CD4-positive, alpha-beta memory T cell (primary cell): ENCODE measurements at regions of chrX and their contacts with region 1.

Region 1: GRCh38 chrX:119753571-119754257 is 4.7 kb upstream of the SOWAHD start:
- DNase-seq: peak; percentile 75 to 87 (median 84)
- H3K4me3 ChIP-seq: no peak overlapping the region
- H3K4me3 Mint-ChIP-seq: peak overlapping the region in 7 of 8 donors; percentile 58 to 81 (median 76)
- H3K27ac ChIP-seq: peak overlapping the region; percentile 67
- H3K27ac Mint-ChIP-seq: peak overlapping the region; percentile 93 to 99 (median 96)
- H3K4me1 ChIP-seq: peaks cover 48% of the 10 kb centered on the region
- H3K4me1 Mint-ChIP-seq: peaks cover 22 to 49% (median 38%) of the 10 kb centered on the region in 4 donors
- H3K27me3 ChIP-seq: no peaks in the 10 kb centered on the region
- H3K27me3 Mint-ChIP-seq: no peaks in the 10 kb centered on the region

Region 2: DNA sequence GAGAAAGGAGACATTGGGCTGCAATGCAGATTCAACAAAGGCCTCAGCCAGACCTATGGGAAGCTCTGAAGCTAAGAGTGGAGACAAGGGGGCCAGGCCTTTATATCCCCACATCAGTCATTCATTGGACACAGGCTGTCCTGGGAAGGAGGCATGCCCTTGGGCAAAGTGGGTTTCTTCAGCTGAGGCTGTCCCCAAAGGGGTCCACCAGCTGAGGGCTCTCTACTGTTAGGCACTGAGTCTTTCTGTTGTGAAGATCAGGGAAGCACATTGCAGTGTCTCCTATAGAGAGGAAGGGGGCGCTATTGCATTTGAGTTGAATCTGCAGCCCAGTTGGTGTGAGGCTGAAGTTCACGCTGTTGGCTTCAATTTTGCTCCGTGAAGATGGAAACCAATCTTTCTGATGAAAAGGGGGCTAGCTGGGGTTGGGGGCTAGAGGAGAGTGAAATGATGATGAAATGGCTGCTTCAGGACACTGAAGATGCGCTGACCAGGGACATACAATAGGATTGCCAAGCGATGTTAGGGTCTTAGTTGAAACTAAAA is 237.5 kb before region 1 on chrX:
- CTCF ChIA-PET with region 1: interaction called, 6 read pairs
- POLR2A ChIA-PET with region 1: interaction called, 4 read pairs
- intact Hi-C with region 1: loop called (anchors 1 kb)
- DNase-seq: peak; percentile 35 to 64 (median 63)
- H3K4me3 ChIP-seq: no peak overlapping the region
- H3K4me3 Mint-ChIP-seq: no peak overlapping the region
- H3K27ac ChIP-seq: no peak overlapping the region
- H3K27ac Mint-ChIP-seq: peak overlapping the region in 5 of 7 donors; percentile 5 to 58 (median 28)
- H3K4me1 ChIP-seq: no peaks in the 10 kb centered on the region
- H3K4me1 Mint-ChIP-seq: peaks cover 2 to 5% (median 4%) of the 10 kb centered on the region in 4 donors
- H3K27me3 ChIP-seq: no peaks in the 10 kb centered on the region
- H3K27me3 Mint-ChIP-seq: no peaks in the 10 kb centered on the region

Region 3: DNA sequence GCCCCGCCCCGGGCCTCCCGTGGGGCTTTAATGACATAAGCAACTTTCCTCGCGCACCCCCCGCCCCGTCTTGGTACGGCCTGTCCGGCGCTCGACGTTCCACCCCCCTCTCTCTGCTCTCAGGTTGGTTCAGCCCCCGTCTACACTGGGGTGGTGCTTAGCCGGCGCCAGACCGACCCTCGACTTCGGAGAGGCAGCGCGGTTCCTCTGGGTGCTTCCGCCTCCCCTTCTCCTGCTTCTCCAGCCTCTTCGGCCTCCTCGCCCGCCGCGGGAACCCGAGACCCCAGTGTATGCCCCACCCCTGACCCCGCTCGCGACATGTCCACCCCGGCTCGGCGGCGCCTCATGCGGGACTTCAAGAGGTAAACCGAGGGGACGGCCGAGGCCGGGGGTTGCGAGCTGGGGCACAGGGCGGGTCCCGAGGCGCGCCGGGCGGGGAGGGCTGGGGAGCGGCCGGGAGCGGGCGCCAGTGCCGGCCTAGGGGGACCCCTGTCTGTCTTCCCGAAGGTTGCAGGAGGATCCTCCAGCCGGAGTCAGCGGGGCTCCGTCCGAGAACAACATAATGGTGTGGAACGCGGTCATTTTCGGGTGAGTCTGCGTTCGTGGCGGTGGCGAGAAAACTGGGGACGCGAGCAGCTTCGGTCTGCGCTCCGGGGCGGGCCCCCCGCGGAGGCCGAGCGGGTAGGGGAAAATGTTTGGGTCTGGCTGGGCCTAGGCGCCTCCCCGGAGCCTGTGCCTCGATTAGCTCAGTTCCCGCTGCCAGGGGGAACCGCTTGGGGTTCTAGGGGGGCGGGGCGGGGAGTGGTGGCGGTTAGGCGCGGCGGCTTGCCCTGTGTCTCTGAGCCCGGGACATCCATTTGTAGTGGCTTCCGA is 179.1 kb before region 1 on chrX and contains the start of gene UBE2A:
- CTCF ChIA-PET with region 1: no interaction called
- POLR2A ChIA-PET with region 1: interaction called, 10 read pairs
- intact Hi-C with region 1: no loop called
- DNase-seq: peak; percentile 86 to 89 (median 89)
- H3K4me3 ChIP-seq: peak within 1 kb of the TSS in 1 of 2 donors; percentile 63
- H3K4me3 Mint-ChIP-seq: peak within 1 kb of the TSS; percentile 85 to 94 (median 92)
- H3K27ac ChIP-seq: peak within 1 kb of the TSS; percentile 78
- H3K27ac Mint-ChIP-seq: peak within 1 kb of the TSS; percentile 88 to 98 (median 96)
- H3K4me1 ChIP-seq: peaks cover 22% of the 10 kb centered on the region
- H3K4me1 Mint-ChIP-seq: peaks cover 2 to 33% (median 16%) of the 10 kb centered on the region in 4 donors
- H3K27me3 ChIP-seq: no peaks in the 10 kb centered on the region
- H3K27me3 Mint-ChIP-seq: no peaks in the 10 kb centered on the region
- total RNA-seq, gene UBE2A: 46.7 to 52.5 TPM

Region 4: DNA sequence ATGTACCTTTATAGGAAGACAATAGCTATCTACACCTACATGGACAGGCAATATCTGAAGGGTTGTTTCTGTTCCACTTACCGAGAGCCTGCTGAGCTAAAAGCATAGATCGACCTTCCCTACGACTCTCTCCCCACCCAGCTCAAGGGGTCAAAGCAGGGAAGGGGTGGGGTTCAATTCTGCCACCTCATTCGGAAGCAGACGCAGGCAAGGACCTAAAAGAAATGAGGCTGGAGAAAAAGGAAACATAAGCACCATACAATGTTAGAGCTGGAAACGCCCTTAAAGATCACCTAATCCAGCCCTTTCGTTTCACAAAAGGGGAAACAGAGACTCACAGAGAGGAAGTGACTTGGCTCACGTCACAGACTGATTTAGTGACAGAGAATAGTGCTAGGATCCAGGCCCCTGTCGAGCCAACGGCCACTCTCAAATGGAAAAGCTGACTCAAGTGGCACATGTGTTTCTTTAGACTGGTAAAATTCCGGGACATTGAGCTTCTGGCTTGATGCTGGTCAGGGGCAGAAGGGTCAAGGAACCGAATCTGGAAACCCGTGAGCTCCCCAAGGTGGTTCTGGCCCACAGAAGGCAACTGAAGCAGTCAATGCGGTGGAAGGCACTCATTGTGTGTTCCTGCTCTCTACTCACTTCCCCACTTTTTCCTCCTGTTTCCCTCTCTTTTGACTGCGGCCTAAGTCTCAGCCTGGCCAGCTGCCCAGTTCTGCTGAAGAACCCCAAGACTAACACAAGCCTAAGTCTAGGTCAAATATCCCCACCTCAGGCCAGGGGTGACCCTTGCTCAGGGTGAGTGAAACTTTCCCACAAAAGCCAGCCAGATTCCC is 68.3 kb before region 1 on chrX:
- CTCF ChIA-PET with region 1: interaction called, 4 read pairs
- POLR2A ChIA-PET with region 1: interaction called, 23 read pairs
- intact Hi-C with region 1: loop called (anchors 5 kb)
- DNase-seq: peak; percentile 59 to 82 (median 69)
- H3K4me3 ChIP-seq: peak overlapping the region; percentile 2 to 46
- H3K4me3 Mint-ChIP-seq: peak overlapping the region; percentile 84 to 100 (median 98)
- H3K27ac ChIP-seq: peak overlapping the region; percentile 89
- H3K27ac Mint-ChIP-seq: peak overlapping the region; percentile 98 to 100 (median 99)
- H3K4me1 ChIP-seq: peaks cover 90% of the 10 kb centered on the region
- H3K4me1 Mint-ChIP-seq: peaks cover 36 to 89% (median 76%) of the 10 kb centered on the region in 4 donors
- H3K27me3 ChIP-seq: no peaks in the 10 kb centered on the region
- H3K27me3 Mint-ChIP-seq: no peaks in the 10 kb centered on the region

Region 5: GRCh38 chrX:119729408-119730201 is 24.1 kb before region 1 on chrX:
- CTCF ChIA-PET with region 1: interaction called, 17 read pairs
- POLR2A ChIA-PET with region 1: interaction called, 5 read pairs
- intact Hi-C with region 1: no loop called
- DNase-seq: peak; percentile 67 to 73 (median 70)
- H3K4me3 ChIP-seq: no peak overlapping the region
- H3K4me3 Mint-ChIP-seq: no peak overlapping the region
- H3K27ac ChIP-seq: no peak overlapping the region
- H3K27ac Mint-ChIP-seq: peak overlapping the region in 1 of 7 donors; percentile 7
- H3K4me1 ChIP-seq: peaks cover 5% of the 10 kb centered on the region
- H3K4me1 Mint-ChIP-seq: peaks cover 6 to 7% (median 7%) of the 10 kb centered on the region in 4 donors
- H3K27me3 ChIP-seq: no peaks in the 10 kb centered on the region
- H3K27me3 Mint-ChIP-seq: no peaks in the 10 kb centered on the region

Region 6: GRCh38 chrX:119784747-119785446 is 31.2 kb after region 1 on chrX:
- CTCF ChIA-PET with region 1: interaction called, 25 read pairs
- POLR2A ChIA-PET with region 1: interaction called, 11 read pairs
- intact Hi-C with region 1: no loop called
- DNase-seq: peak; percentile 43 to 59 (median 58)
- H3K4me3 ChIP-seq: no peak overlapping the region
- H3K4me3 Mint-ChIP-seq: peak overlapping the region in 1 of 8 donors; percentile 40
- H3K27ac ChIP-seq: no peak overlapping the region
- H3K27ac Mint-ChIP-seq: peak overlapping the region; percentile 14 to 77 (median 64)
- H3K4me1 ChIP-seq: peaks cover 30% of the 10 kb centered on the region
- H3K4me1 Mint-ChIP-seq: peaks cover 13 to 47% (median 27%) of the 10 kb centered on the region in 4 donors
- H3K27me3 ChIP-seq: no peaks in the 10 kb centered on the region
- H3K27me3 Mint-ChIP-seq: no peaks in the 10 kb centered on the region

Region 7: DNA sequence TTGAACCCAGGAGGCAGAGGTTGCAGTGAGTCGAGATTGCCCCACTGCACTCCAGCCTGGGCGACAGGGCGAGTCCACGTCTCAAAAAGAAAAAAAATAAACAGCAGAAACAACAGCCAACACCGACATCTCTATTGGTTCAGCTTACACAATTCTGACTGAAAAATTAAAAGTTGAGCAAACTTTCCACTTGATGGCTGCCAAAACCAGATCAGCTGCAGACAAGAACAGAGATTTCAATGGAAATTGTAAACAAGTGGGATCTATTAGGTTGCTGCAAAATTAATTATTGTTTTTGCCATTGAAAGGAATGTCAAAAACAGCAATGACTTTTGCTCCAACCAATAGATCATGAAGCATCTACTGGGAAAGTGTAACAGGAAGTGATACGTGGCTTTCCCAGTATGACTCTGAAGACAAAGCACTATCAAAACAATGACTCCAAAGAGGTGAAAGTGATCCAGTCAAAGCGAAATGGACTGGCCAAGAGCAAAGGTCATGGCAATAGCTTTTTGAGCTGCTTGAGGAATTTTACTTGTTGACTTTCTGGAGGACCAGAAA is 72.8 kb after region 1 on chrX:
- CTCF ChIA-PET with region 1: no interaction called
- POLR2A ChIA-PET with region 1: interaction called, 4 read pairs
- intact Hi-C with region 1: loop called (anchors 2 kb)
- DNase-seq: no peak
- H3K4me3 ChIP-seq: no peak overlapping the region
- H3K4me3 Mint-ChIP-seq: no peak overlapping the region
- H3K27ac ChIP-seq: no peak overlapping the region
- H3K27ac Mint-ChIP-seq: no peak overlapping the region
- H3K4me1 ChIP-seq: peaks cover 8% of the 10 kb centered on the region
- H3K4me1 Mint-ChIP-seq: peaks cover 6 to 20% (median 9%) of the 10 kb centered on the region in 4 donors
- H3K27me3 ChIP-seq: no peaks in the 10 kb centered on the region
- H3K27me3 Mint-ChIP-seq: no peaks in the 10 kb centered on the region

Region 8: DNA sequence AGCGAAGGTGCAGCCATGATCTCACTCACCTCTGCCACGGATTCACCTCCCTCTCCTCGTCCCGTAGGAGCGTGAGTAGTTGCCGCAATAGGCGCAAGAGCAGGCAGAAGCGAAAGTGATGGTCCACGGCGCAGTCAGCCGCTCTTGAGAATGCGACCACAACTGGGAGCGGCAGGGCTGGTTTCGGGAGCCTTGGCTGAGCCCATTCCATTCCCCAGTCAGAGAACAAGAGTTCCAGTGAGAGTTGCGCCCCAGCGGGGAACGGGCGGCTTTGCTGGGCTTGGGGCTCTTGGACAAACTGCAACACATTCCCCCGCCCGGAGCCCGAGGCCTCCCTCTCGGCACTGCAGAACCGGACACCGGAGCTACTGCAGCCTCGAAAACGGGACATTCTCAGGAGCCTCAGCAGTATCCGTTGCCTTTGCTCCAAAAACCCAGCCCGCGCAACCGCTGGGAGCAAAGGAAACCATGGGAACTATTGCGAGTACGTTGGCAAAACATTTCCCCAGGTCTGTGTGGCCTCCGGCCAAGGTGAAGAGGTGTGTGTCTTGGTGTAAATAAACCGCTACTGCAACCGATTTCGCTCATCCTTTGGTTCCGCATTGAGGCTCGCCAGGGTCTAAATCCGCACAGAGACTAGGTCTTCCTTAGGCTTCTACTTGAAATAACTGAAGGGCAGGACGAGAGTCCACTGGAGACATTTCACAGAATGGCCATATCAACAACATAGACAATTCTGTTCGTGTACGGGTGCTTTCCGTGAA is 491.2 kb after region 1 on chrX:
- CTCF ChIA-PET with region 1: no interaction called
- POLR2A ChIA-PET with region 1: no interaction called
- intact Hi-C with region 1: no loop called
- DNase-seq: peak; percentile 57 to 64 (median 62)
- H3K4me3 ChIP-seq: peak overlapping the region; percentile 30 to 81
- H3K4me3 Mint-ChIP-seq: peak overlapping the region; percentile 89 to 99 (median 94)
- H3K27ac ChIP-seq: peak overlapping the region; percentile 56
- H3K27ac Mint-ChIP-seq: peak overlapping the region; percentile 88 to 94 (median 91)
- H3K4me1 ChIP-seq: peaks cover 16% of the 10 kb centered on the region
- H3K4me1 Mint-ChIP-seq: peaks cover 9 to 29% (median 14%) of the 10 kb centered on the region in 4 donors
- H3K27me3 ChIP-seq: no peaks in the 10 kb centered on the region
- H3K27me3 Mint-ChIP-seq: no peaks in the 10 kb centered on the region

Region 9: DNA sequence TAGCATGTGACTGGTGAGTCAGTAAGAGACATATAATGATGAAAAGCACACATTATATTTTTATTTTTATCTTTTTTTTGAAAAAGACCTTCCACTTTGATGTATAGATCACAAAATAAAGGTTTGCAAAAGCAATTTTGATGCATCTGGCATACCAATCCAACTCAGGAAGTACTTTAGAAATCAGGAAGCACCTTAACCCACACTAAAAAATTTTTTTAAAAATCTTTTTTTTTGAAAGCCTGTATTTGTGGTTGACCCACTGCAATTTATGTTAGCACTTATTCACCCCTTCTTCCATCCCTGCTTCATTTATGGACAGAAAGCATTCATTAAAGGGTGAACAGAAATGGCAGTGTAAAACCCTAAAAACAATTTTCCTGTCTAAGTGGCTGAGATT is 540.9 kb after region 1 on chrX:
- CTCF ChIA-PET with region 1: no interaction called
- POLR2A ChIA-PET with region 1: no interaction called
- intact Hi-C with region 1: no loop called
- DNase-seq: peak in 1 of 5 donors; percentile 17
- H3K4me3 ChIP-seq: no peak overlapping the region
- H3K4me3 Mint-ChIP-seq: peak overlapping the region in 3 of 8 donors; percentile 11 to 65 (median 18)
- H3K27ac ChIP-seq: no peak overlapping the region
- H3K27ac Mint-ChIP-seq: peak overlapping the region in 6 of 7 donors; percentile 24 to 86 (median 56)
- H3K4me1 ChIP-seq: peaks cover 15% of the 10 kb centered on the region
- H3K4me1 Mint-ChIP-seq: peaks cover 6 to 20% (median 9%) of the 10 kb centered on the region in 4 donors
- H3K27me3 ChIP-seq: no peaks in the 10 kb centered on the region
- H3K27me3 Mint-ChIP-seq: no peaks in the 10 kb centered on the region

Region 10: GRCh38 chrX:121208563-121208962 is 1454.8 kb after region 1 on chrX:
- CTCF ChIA-PET with region 1: no interaction called
- POLR2A ChIA-PET with region 1: no interaction called
- intact Hi-C with region 1: no loop called
- DNase-seq: no peak
- H3K4me3 ChIP-seq: no peak overlapping the region
- H3K4me3 Mint-ChIP-seq: no peak overlapping the region
- H3K27ac ChIP-seq: no peak overlapping the region
- H3K27ac Mint-ChIP-seq: no peak overlapping the region
- H3K4me1 ChIP-seq: no peaks in the 10 kb centered on the region
- H3K4me1 Mint-ChIP-seq: no peaks in the 10 kb centered on the region
- H3K27me3 ChIP-seq: no peaks in the 10 kb centered on the region
- H3K27me3 Mint-ChIP-seq: no peaks in the 10 kb centered on the region